RWPE1 (cell line): ENCODE measurements at regions of chr12 and their contacts with region 1.

Region 1: DNA sequence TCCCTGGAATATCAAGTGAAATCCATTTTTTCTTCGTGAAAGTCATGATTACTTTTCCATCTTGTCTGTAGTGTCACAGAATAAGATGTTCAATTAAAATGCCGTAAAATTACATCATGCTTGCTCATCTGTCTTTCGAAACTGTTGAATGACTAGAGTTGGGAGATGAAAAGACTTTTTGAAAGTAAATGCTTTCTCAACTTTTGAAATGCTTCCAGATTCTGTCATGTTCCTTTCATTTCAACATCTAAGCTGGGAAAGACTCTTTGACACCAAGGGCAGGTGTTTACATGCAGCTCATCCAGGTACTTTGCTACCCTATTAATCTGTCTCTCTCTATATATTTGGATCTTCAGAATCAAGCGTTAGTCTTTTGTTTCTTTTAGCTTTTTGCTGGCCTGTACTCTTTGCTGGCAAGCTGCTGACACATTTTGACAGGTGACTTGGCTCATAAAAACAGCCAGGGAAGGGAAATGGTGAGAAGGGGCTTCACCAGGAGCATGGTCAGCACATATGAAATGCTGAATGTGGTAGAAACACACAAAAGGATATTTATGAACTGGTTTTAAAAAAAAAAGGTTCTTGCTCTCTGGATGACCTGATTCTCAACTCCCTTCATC is 77.0 kb upstream of the METAP2 start:
- DNase-seq: peak; percentile 87
- H3K27ac ChIP-seq: no peak overlapping the region
- CTCF ChIP-seq: no peak

Region 2: DNA sequence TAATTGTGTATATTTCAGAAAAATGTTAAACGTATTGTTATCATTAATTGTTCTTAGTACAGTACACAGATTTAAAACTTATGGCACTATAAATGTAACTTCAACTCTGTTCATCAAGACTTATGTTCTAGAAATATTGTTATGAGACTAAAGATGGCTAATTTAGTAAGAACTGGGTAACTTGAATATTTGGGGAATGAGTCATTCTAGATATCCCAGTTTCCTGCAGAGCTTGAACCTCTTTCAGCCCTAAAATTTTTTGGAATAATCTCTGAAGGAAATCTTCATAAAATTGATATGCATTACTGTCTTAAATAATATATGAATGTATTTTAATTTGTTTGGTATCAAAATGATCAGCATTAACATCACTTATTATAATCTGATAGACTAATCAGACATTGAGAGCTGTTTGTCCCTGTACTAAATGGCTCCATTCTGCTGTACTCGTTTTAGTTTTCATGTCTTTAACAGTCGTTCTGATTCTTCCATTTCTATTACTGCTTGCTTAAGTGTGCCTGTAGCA is 92.2 kb before region 1 on chr12:
- CTCF ChIA-PET with region 1: interaction called, 12 read pairs
- POLR2A ChIA-PET with region 1: no interaction called
- DNase-seq: no peak
- H3K27ac ChIP-seq: no peak overlapping the region
- CTCF ChIP-seq: no peak

Region 3: GRCh38 chr12:95412482-95413311 is 15.7 kb after region 1 on chr12:
- CTCF ChIA-PET with region 1: no interaction called
- POLR2A ChIA-PET with region 1: no interaction called
- DNase-seq: peak; percentile 58
- H3K27ac ChIP-seq: peak overlapping the region; percentile 22; the same call in 1 of the 2 replicates
- CTCF ChIP-seq: no peak